ENCODE measurements at regions of chr22 and their contacts with region 1.

Region 1: GRCh38 chr22:39520054-39520891 is at the start of gene ATF4:
- DNase-seq: peak; percentile 98
- H3K4me3 ChIP-seq: peak within 1 kb of the TSS; percentile 97 to 100 (median 99)
- H3K27ac ChIP-seq: peak within 1 kb of the TSS; percentile 99 to 100
- H3K4me1 ChIP-seq: peaks cover 9 to 22% of the 10 kb centered on the region in 2 donors
- H3K27me3 ChIP-seq: no peaks in the 10 kb centered on the region
- CTCF ChIP-seq: peak in 2 of 3 donors; percentile 13 to 37
- POLR2A ChIP-seq: peak; percentile 99
- total RNA-seq, gene ATF4: 339 to 403 (median 347) TPM

Region 2: DNA sequence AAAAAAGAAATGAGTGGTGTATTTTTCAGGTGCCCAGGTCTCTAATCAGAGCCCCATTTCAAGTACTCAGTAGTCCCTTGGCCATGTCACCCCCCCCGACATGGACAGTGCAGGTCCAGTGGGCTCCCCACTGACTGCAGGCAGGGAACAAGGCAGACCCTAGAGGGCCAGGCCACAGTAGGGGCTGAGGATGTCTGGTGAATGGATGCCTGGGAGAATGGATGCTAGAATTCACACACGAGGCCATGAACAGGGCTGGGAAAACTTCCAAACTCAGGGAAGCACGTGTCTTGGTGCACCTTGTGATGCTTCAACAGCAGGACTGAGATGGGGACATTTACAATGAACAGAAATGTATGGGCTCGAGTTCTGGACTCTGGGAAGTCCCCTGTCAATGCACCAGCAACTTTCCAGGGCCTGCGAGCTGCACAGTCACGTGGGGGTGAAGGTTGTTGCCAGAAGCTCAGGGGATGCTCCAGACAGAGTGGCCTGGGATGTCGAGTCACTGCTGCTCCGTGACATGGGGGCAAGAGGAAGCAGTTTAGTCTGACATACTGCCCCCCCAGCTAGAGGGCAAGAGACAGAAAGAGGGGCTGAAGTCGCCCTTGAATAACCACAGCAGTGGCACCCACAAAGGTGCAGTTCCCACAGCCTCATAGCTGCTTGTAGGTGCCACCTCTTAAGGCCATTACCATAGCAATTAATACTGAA is 440.1 kb before region 1 on chr22:
- intact Hi-C with region 1: no loop called
- DNase-seq: no peak
- H3K4me3 ChIP-seq: no peak overlapping the region
- H3K27ac ChIP-seq: no peak overlapping the region
- H3K4me1 ChIP-seq: no peaks in the 10 kb centered on the region
- H3K27me3 ChIP-seq: no peaks in the 10 kb centered on the region
- CTCF ChIP-seq: no peak
- POLR2A ChIP-seq: no peak

Region 3: DNA sequence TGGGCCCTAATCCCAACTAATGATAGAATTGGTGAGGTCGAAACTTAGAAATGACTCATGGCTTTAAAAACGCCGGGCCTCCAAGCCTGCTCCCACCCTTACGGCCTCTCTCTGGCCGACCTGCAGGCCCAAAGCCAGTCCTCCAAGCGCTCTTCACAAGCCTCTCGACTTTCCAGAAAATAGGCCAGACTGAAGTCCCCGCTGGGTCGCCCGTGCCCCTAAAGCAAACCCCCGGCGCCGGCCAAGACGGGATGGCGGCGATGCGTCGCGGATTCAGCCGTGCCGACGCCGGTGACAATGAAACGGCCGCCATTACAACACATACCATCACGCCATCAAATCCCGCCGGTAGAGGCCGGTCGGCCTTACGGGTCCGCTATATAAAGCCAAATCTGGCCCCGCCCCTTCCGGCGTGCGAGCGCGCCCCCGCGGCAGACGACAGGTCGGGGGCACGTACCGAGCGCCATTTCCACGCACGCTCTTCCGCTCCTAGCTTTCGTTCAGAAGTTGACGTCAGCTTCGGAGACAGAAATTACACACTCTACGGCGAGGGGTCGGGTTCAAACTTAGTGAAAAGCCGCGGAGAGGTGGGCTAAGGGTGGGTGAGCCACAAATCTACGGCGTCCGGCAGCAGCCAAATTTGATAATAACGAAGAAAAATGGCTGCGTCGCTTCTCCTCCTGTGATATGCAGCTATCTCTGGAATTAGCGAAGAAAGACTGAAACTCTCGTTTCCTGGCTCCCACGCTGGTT is 200.8 kb before region 1 on chr22 and contains the start of gene RPL3:
- intact Hi-C with region 1: loop called (anchors 10 kb)
- DNase-seq: peak; percentile 95 to 96
- H3K4me3 ChIP-seq: peak within 1 kb of the TSS; percentile 81 to 83 (median 81)
- H3K27ac ChIP-seq: peak within 1 kb of the TSS; percentile 95 to 98
- H3K4me1 ChIP-seq: peaks cover 15 to 21% of the 10 kb centered on the region in 2 donors
- H3K27me3 ChIP-seq: no peaks in the 10 kb centered on the region
- CTCF ChIP-seq: peak; percentile 28 to 48 (median 46)
- POLR2A ChIP-seq: peak; percentile 97
- total RNA-seq, gene RPL3: 1,827 to 3,262 (median 2,633) TPM

Region 4: GRCh38 chr22:39388261-39389011 is 131.8 kb before region 1 on chr22:
- intact Hi-C with region 1: no loop called
- DNase-seq: peak; percentile 75
- H3K4me3 ChIP-seq: peak overlapping the region; percentile 50 to 85 (median 65)
- H3K27ac ChIP-seq: peak overlapping the region; percentile 26 to 58
- H3K4me1 ChIP-seq: no peaks in the 10 kb centered on the region
- H3K27me3 ChIP-seq: no peaks in the 10 kb centered on the region
- CTCF ChIP-seq: no peak
- POLR2A ChIP-seq: no peak

Region 5: DNA sequence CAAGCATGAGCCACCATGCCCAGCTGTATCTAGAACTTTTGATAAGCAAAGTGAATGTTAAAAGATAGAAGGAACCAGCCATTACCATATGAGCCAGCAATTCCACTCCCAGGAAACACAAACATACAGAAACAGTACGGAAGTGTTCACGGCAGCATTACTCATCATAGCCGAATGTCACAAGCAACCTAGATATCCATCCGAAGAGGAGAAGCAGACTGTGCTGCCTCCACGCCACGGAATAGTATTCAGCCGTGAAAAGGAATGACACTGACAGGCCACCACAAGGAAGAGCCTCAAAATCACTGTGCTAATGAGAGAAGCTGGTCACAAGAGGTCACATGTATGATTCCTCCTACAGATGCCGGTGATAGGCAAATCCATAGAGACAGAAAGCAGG is 81.1 kb before region 1 on chr22:
- intact Hi-C with region 1: loop called (anchors 10 kb)
- DNase-seq: no peak
- H3K4me3 ChIP-seq: no peak overlapping the region
- H3K27ac ChIP-seq: no peak overlapping the region
- H3K4me1 ChIP-seq: peaks cover 0 to 8% of the 10 kb centered on the region in 2 donors
- H3K27me3 ChIP-seq: no peaks in the 10 kb centered on the region
- CTCF ChIP-seq: no peak
- POLR2A ChIP-seq: no peak

Region 6: DNA sequence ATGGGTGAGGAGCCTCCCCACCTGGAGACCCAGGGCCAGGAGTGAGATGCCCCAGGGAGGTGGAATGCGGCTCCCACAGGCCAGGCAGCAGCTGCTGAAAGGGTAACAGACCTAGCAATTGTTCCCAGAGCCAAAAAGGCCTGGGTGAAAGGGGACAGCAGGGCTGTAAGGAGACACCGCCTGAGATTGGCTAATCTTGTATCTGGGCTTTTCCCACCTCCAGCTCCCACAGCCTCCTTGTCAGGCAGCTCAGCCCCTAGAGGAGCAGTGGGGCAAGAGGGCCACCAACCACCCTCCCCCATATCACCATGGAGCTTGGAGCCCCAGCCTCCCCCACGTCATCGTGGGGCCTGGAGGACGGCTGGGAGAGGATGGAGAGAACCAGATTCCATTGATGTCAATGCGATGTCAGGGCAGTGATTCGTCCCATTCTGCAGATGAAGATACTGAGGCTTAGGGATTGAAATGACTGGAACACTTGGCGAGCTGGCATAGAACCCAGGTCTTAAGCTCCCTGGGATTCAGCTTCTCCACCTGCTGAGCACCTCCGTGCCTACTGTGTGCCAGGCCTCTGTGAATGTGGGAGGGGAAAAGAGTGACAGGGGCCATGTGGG is 66.4 kb before region 1 on chr22:
- intact Hi-C with region 1: no loop called
- DNase-seq: no peak
- H3K4me3 ChIP-seq: no peak overlapping the region
- H3K27ac ChIP-seq: peak overlapping the region in 1 of 2 donors; percentile 32
- H3K4me1 ChIP-seq: peaks cover 0 to 7% of the 10 kb centered on the region in 2 donors
- H3K27me3 ChIP-seq: peaks cover 4 to 6% of the 10 kb centered on the region in 2 donors
- CTCF ChIP-seq: no peak
- POLR2A ChIP-seq: no peak

Region 7: GRCh38 chr22:39556970-39557841 is 36.9 kb after region 1 on chr22:
- intact Hi-C with region 1: no loop called
- DNase-seq: no peak
- H3K4me3 ChIP-seq: peak overlapping the region in 2 of 3 donors; percentile 40 to 65
- H3K27ac ChIP-seq: no peak overlapping the region
- H3K4me1 ChIP-seq: peaks cover 0 to 4% of the 10 kb centered on the region in 2 donors
- H3K27me3 ChIP-seq: peaks cover 8 to 40% of the 10 kb centered on the region in 2 donors
- CTCF ChIP-seq: no peak
- POLR2A ChIP-seq: no peak